Activated naive CD4-positive, alpha-beta T cell treated with anti-CD3 and anti-CD28 coated beads, Interleukin-2, amount 10 ng/mL, durations not matched to agents 7 days and 5 days (primary cell): ENCODE measurements at regions of chr2 and their contacts with region 1.

Region 1: DNA sequence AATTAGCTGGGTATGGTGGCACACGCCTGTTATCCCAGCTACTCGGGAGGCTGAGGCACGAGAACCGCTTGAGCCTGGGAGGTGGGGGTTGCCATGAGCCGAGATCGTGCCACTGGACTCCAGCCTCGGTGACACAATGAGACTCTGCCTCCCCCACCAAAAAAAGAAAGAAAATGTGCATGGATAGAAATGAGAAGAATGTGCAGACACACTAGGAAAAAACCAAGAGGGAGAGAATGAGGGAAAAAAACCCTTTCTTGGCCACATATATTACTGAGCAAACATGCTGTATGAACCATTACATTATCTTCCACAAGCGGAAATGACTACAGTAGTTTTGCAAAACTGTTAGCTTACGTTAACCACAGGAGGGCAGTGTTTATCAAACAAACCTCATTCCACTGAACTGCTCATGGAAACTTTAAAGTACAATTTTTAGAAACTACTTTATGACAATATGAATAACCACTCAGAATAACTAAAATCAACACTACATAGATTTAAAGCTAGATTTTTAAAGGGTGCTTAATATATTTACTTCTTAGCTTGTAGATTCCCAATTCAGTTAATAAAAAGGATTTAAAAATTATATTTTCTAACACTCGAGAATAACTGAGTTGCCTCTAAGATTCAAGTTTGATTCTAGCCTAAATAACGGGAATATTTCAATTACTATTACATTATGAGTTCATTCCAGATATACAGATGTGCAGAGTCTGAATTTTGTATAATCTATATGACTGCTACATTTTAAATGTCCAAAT is 26.4 kb downstream of the ASXL2 start:
- DNase-seq: peak; percentile 29
- H3K4me3 Mint-ChIP-seq: peak overlapping the region; percentile 32
- H3K27ac Mint-ChIP-seq: peak overlapping the region; percentile 28
- H3K4me1 Mint-ChIP-seq: peaks cover 40% of the 10 kb centered on the region
- H3K27me3 Mint-ChIP-seq: no peaks in the 10 kb centered on the region

Region 2: DNA sequence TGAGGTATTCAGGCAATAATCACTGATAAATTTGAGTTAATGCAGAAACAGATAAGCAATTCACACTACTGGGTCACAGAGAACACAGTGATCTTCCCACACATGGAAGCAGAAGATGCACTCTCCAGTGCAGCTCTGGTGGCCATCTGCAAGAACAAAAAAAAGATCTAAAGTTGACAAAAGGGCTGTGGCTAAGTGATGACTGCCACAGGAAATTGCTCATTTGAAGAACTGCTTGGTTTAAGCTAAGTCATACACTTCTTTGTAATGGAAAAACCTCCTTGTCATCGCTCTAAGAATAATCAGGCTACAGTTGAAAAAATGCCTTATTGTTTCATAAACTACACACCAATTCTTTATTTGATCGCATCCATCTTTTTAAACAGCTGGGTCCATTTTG is 293.7 kb before region 1 on chr2:
- CTCF ChIA-PET with region 1: no interaction called
- DNase-seq: peak; percentile 61
- H3K4me3 Mint-ChIP-seq: no peak overlapping the region
- H3K27ac Mint-ChIP-seq: peak overlapping the region; percentile 85
- H3K4me1 Mint-ChIP-seq: peaks cover 35% of the 10 kb centered on the region
- H3K27me3 Mint-ChIP-seq: no peaks in the 10 kb centered on the region

Region 3: DNA sequence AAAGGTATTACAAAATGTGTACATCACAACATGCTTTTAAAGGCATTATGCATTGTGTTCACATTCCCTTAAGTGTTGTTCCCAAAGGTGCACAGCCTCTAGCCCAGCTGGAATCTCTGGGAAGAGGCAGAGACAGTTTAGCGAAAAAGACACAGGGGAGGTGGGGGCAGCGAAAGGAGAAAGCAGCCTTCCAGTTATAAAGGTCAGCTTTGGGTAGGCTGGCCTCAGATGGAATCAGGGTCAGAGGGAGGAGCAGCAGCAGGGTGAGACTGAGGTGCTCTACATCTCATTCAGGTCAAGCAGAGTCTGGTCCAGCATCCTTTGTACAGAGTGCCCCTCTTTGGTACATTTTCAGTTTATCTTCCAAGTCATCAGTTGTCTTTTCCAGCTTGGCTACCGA is 42.3 kb before region 1 on chr2:
- CTCF ChIA-PET with region 1: interaction called, 10 read pairs
- DNase-seq: no peak
- H3K4me3 Mint-ChIP-seq: no peak overlapping the region
- H3K27ac Mint-ChIP-seq: no peak overlapping the region
- H3K4me1 Mint-ChIP-seq: peaks cover 53% of the 10 kb centered on the region
- H3K27me3 Mint-ChIP-seq: no peaks in the 10 kb centered on the region

Region 4: DNA sequence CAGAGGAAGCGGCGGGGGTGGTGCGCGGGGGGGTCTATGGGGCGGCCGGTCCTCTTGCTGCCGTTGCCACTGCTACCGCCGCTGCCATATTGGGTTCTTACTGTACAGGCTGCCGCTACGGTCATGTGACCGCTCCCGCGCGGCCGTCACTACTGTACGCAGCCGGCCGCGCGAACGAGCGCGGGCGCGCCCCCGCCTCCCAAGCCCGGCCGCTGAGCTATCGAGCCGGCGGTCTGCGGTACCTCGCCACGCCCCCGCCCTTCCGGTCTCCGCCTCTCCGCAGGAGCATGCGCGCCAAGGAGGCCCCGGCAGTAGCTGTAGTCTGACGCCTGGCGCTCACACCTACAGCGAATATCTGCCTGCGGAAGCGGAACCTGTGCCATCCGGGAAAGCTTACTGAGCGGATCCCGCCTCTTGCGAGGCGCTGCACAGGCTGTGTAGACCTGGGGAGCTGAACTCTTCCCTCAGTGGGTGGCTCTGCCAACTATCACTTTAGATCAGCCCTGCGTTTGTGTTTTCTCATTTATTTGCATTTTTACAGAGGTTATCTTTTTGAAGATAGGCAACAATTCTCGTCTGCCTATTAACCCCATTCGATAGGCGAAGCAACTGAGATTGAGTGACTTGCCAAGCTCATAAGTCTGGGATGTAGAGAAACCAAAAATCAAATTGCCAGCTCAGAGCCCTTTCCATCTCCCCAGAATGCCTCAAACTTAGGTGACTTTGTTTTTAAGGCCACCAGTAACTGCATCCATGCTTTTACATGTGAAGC is 26.6 kb after region 1 on chr2 and contains the start of gene ASXL2:
- CTCF ChIA-PET with region 1: interaction called, 18 read pairs
- DNase-seq: peak; percentile 97
- H3K4me3 Mint-ChIP-seq: peak within 1 kb of the TSS; percentile 98
- H3K27ac Mint-ChIP-seq: peak within 1 kb of the TSS; percentile 100
- H3K4me1 Mint-ChIP-seq: peaks cover 34% of the 10 kb centered on the region
- H3K27me3 Mint-ChIP-seq: no peaks in the 10 kb centered on the region

Region 5: DNA sequence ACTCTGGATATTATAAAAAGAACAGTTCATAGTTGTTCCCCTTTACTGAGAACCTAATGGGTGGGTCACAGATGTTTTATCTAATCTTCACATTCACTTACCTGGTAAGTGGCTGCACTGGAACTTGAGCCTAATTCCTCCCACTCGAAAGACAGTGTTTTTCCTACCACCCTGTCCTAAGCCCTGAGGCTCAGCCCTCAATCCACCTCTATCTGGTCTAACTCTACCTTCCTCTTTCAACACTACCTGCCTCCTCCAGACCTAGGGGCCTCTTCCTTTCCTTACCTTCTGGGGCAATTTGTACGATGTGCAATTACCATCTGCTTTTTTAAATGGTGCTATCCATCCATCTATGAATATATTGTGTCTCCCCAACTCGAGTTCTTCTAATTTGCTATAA is 140.0 kb after region 1 on chr2:
- CTCF ChIA-PET with region 1: interaction called, 20 read pairs
- DNase-seq: no peak
- H3K4me3 Mint-ChIP-seq: no peak overlapping the region
- H3K27ac Mint-ChIP-seq: no peak overlapping the region
- H3K4me1 Mint-ChIP-seq: peaks cover 16% of the 10 kb centered on the region
- H3K27me3 Mint-ChIP-seq: peaks cover 11% of the 10 kb centered on the region